Panc1 (cell line): ENCODE measurements at regions of chr14 and their contacts with region 1.

Region 1: DNA sequence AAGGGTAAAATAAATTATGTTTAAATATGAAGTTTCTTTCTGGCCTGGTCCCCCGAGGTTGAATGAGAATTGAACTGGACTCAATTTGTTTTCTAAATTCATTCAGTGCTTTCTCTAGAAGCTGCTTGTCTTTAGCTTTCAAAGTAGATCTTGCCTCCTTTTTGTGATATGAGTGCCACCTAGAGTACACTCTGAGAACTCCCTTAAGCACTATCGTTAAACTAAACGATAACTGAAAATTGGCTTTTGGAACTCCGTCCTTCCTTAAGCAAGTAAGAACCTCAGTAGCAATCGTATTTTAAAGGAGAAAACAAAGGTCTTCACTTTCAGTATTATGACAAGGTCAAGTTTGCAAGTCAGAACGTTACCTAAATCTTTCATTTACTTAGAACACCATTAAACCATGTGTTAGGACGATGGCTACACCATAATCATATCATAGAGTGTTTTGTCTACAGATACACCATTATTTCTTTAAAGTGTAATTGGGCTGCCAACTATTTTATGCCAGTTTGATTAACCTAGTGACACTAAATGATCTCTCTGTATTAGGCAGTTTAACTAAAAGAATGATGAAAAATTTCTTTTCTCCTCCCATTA is 364.8 kb downstream of the SNAPC1 start:
- DNase-seq: peak; percentile 43
- ATAC-seq: 0 out of 2 replicates have a peak, but pooled peaks have one; percentile 66
- H3K4me3 ChIP-seq: no peak overlapping the region
- H3K27ac ChIP-seq: no peak overlapping the region
- H3K4me1 ChIP-seq: no peaks in the 10 kb centered on the region
- H3K27me3 ChIP-seq: no peaks in the 10 kb centered on the region; the same call in 1 of the 2 replicates
- CTCF ChIP-seq: peak; percentile 69; the same call in 1 of the 2 replicates

Region 2: DNA sequence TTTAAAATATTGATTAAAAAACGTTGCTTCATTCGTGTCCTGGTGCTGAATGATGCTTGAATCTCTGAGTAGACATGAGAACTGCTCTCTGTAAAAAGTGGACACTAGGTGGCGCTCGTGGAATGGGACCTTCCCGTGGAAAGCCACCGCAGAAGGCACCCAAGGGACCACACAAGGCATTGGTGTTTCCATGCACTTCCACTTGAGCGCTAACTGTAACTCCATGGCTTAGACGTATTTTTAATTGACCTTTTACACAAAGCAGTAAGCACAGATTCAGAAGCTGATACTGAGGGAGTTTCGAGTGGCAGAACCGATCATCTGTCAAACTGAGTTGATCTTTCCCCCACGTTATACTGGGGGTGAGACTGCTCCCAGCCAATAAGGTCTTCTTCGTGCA is 670.3 kb before region 1 on chr14:
- CTCF ChIA-PET with region 1: no interaction called
- POLR2A ChIA-PET with region 1: no interaction called
- in situ Hi-C with region 1: no loop called
- intact Hi-C with region 1: loop called (anchors 10 kb)
- DNase-seq: no peak
- ATAC-seq: peak; percentile 91
- H3K4me3 ChIP-seq: no peak overlapping the region
- H3K27ac ChIP-seq: no peak overlapping the region
- H3K4me1 ChIP-seq: no peaks in the 10 kb centered on the region
- H3K27me3 ChIP-seq: no peaks in the 10 kb centered on the region
- CTCF ChIP-seq: peak; percentile 85

Region 3: DNA sequence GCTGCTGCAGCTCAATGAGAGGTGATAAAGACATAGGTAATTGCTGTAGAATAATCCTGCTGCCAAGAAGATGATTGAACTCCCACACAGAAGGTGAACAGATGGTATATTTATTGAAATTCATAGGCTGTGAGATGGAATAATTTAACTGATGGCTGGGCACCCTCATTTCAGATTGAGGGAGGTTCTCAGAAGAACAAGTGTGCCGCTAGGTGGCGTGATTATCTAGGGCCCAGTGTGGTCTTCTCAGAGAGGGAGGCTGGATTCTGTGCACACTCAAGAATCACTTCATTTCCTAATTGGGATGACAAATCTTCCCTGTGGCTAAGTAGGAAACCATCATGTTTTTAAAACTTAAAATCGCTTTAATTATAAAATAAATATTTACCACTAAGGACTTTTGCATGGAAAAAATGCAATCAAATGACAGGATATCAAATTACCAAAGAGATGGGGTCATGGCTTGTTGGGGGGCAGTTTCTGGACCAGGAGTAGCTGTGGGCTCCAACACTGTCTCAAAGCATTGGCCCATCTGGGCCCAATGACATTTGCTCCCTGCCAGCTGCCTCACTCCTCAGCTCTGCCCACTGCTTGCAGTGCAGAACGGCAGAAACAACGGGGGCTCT is 232.4 kb before region 1 on chr14:
- CTCF ChIA-PET with region 1: interaction called, 5 read pairs
- POLR2A ChIA-PET with region 1: no interaction called
- in situ Hi-C with region 1: no loop called
- intact Hi-C with region 1: loop called (anchors 2 kb)
- DNase-seq: peak; percentile 25
- ATAC-seq: no peak
- H3K4me3 ChIP-seq: no peak overlapping the region
- H3K27ac ChIP-seq: no peak overlapping the region
- H3K4me1 ChIP-seq: no peaks in the 10 kb centered on the region
- H3K27me3 ChIP-seq: no peaks in the 10 kb centered on the region; the same call in 1 of the 2 replicates
- CTCF ChIP-seq: peak; percentile 83

Region 4: DNA sequence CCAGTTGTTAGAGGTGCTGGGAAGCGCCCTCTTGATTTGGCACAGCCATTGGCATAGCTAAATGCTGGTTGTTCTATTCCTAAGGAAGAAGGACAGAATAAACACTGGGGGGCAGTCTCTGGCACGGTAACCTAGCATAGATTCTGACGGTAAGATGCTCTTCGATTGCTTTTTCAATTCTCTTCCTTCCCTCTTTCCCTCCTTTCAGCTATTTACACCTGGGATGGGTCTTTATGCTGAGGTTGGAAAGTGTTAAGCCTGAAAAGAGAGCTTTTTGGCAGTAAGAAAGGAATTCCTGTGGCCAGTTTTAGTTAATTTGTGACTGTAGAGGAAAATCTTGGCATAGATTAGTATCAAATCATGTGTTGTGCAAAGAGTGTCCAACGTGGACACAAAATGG is 201.9 kb before region 1 on chr14:
- CTCF ChIA-PET with region 1: no interaction called
- POLR2A ChIA-PET with region 1: no interaction called
- in situ Hi-C with region 1: no loop called
- intact Hi-C with region 1: loop called (anchors 10 kb)
- DNase-seq: no peak
- ATAC-seq: no peak
- H3K4me3 ChIP-seq: no peak overlapping the region
- H3K27ac ChIP-seq: no peak overlapping the region
- H3K4me1 ChIP-seq: no peaks in the 10 kb centered on the region
- H3K27me3 ChIP-seq: no peaks in the 10 kb centered on the region
- CTCF ChIP-seq: peak; percentile 26